ENCODE measurements at regions of chr2 and their contacts with region 1.

Region 1: DNA sequence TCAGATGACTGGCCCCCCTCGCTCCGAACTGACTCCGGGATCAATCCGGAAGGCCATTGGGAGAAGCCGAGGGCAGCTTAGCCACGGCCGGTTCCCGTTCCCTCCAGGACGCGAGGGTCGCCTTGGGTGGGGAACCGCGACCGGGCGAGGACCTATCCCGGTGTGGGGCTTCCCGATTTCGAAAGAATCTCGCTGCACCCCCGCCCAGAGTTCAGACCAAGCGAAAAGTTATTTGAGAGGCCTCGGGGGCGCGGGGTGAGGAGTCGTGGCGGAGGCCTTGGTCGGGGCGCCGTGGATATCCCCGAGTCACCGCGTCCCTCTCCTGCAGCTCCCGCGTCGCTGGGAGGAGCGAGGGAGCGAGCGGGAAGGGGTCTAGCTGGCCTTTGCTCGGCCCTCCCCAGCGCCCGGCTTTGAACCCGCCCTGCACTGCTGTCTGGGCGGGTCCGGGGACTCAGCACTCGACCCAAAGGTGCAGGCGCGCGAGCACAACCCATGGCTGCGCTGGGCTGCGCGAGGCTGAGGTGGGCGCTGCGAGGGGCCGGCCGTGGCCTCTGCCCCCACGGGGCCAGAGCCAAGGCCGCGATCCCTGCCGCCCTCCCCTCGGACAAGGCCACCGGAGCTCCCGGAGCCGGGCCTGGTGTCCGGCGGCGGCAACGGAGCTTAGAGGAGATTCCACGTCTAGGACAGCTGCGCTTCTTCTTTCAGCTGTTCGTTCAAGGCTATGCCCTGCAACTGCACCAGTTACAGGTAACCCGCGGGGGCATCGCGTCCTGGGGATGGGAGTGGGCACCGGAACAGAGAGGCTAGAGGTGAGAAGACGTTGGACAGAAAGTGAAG is at the start of gene CYP27A1:
- DNase-seq: peak; percentile 79 to 83
- ATAC-seq: peak; percentile 92
- H3K4me3 ChIP-seq: peak within 1 kb of the TSS; percentile 64 to 73
- H3K27ac ChIP-seq: peak within 1 kb of the TSS; percentile 74 to 75
- H3K4me1 ChIP-seq: peaks cover 0 to 3% of the 10 kb centered on the region in 2 donors
- H3K27me3 ChIP-seq: no peaks in the 10 kb centered on the region
- total RNA-seq, gene CYP27A1: 31.9 to 50.6 TPM

Region 2: GRCh38 chr2:218319813-218320365 is 462.0 kb before region 1 on chr2:
- intact Hi-C with region 1: no loop called
- DNase-seq: no peak
- ATAC-seq: no peak
- H3K4me3 ChIP-seq: no peak overlapping the region
- H3K27ac ChIP-seq: no peak overlapping the region
- H3K4me1 ChIP-seq: no peaks in the 10 kb centered on the region
- H3K27me3 ChIP-seq: no peaks in the 10 kb centered on the region

Region 3: DNA sequence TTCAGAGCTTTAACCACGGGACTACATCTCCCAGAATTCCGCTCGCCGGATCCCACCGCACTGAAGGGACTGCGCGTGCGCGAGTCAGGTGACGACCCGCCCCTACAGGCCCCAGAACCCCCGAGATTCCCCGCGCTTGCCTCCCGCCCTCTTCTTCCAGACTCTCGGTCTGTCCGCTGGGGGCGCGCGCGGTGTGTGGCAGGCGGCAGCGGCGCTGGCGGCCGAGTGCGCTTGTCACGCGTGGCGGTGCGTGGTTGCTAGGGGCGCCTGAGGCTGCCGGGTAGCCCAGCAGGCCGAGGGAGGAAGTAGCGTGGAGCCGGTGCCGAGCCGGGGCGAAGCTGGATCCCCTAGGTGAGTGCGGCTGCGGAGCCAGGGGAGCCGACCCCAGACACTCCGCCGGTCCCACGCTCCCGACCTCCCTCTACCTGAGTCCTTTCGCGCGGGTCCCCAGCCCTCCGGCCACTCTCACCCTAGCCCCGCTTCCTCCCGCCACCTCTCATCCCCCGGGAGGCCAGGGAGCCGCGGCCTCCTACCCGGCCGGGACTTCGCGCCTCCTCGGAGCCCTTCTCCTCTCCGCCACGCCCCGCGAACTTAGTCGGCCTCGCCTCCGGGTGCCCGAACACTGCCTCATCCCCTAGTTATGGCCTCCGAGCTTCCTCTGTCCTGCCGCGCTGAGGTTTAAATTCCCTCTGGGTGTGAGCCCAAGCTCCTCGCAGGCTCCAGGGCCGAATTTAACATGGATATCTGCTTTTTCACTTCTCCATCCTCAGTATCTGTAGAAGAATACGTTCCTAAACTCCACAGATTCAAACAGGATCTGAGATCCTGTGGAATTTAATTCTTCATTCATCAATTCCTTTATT is 71.0 kb before region 1 on chr2 and contains the start of gene TTLL4:
- intact Hi-C with region 1: no loop called
- DNase-seq: peak; percentile 99 to 100
- ATAC-seq: peak; percentile 100
- H3K4me3 ChIP-seq: peak within 1 kb of the TSS; percentile 13 to 45
- H3K27ac ChIP-seq: peak within 1 kb of the TSS in 1 of 2 donors; percentile 14
- H3K4me1 ChIP-seq: no peaks in the 10 kb centered on the region
- H3K27me3 ChIP-seq: no peaks in the 10 kb centered on the region
- total RNA-seq, gene TTLL4: 22.3 to 36.3 TPM

Region 4: DNA sequence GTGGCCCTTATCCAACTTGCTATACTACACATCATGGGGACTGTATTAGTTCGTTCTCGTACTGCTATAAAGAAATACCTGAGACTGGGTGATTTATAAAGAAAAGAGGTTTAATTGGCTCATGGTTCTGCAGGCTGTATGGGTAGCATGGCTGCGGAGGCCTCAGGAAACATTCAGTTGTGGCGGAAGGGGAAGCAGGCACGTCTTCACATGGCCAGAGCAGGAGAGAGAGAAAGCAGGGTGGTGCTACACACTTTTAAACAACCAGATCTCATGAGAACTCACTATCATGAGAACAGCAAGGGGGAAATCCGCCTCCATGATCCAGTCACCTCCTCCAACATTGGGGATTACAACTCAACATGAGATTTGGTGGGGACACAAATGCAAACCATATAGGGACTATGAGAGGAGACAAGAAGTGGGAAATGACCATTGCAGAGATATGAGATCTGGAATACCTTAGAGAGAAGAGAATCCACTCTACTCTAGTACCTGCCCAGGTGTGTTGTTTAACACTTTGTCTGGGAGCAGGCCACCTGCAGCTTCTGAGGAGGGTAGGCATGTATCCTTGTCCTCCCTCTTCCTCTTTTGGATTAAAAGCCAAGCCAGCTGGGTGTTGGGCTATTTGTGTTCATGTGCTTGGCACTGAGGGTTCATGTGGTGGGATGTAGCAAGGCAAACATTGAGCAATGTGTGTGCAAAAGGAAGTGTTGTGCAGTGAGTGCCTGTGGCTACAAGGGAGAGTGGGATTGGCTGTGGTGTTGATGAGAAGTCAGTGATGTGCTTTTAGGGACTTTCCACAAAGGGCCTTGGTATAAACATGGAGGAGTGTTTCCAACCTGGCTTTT is 48.5 kb before region 1 on chr2:
- intact Hi-C with region 1: loop called in 1 of 2 experiments (anchors 10 kb)
- DNase-seq: peak in 1 of 2 donors; percentile 75
- ATAC-seq: peak; percentile 40
- H3K4me3 ChIP-seq: no peak overlapping the region
- H3K27ac ChIP-seq: no peak overlapping the region
- H3K4me1 ChIP-seq: peaks cover 0 to 2% of the 10 kb centered on the region in 2 donors
- H3K27me3 ChIP-seq: no peaks in the 10 kb centered on the region